AG04450 (cell line): ENCODE measurements at regions of chr20 and their contacts with region 1.

Region 1: GRCh38 chr20:5557123-5557522 is 193.1 kb upstream of the SHLD1 start:
- DNase-seq: no peak
- H3K4me3 ChIP-seq: no peak overlapping the region
- H3K27ac ChIP-seq: no peak overlapping the region
- H3K27me3 ChIP-seq: no peaks in the 10 kb centered on the region
- CTCF ChIP-seq: peak; percentile 75

Region 2: DNA sequence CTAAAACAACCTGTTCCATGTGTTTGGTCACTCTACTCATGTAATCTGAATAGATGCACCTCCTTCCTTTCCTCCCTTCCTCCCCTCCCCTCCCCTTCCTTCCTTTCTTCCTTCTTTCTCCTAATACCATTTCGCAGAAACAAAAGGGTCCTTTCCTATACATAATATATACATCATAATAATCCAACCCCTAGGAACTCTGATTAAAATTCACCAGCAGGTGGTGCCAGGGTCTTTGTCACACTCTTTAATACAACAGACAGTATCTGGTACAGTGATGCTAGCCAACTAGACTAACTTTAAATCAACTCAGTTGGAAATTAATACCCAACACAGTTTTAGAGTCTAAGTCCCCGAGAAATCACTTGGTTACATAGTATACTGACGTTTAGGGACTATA is 11.9 kb after region 1 on chr20:
- CTCF ChIA-PET with region 1: interaction called, 20 read pairs
- POLR2A ChIA-PET with region 1: no interaction called
- DNase-seq: no peak
- H3K4me3 ChIP-seq: no peak overlapping the region
- H3K27ac ChIP-seq: no peak overlapping the region
- H3K27me3 ChIP-seq: no peaks in the 10 kb centered on the region
- CTCF ChIP-seq: peak; percentile 57

Region 3: DNA sequence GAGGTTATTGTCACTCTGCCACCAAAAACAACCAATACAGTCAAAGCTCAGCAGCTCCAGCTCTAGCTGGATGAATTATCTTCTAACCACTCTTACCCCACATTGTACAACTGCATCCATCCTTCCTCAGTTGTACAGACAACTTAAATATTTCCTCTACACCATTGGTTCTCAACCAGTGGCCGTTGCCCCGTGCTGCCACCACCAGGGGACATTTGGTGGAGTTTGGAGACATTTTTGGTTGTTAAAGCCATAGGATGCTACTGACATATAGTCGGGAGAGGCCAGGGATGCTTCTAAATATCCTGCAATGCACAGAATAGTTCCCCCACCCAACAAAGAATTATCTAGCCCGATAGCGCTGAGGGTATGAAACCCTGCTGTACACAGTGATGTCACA is 252.4 kb after region 1 on chr20:
- CTCF ChIA-PET with region 1: interaction called, 10 read pairs
- POLR2A ChIA-PET with region 1: no interaction called
- DNase-seq: no peak
- H3K4me3 ChIP-seq: no peak overlapping the region
- H3K27ac ChIP-seq: no peak overlapping the region
- H3K27me3 ChIP-seq: no peaks in the 10 kb centered on the region
- CTCF ChIP-seq: no peak